ENCODE measurements at regions of chr21 and their contacts with region 1.

Region 1: GRCh38 chr21:33199516-33200217 is 30.1 kb upstream of the IFNAR2 start:
- DNase-seq: peak in 2 of 3 donors; percentile 69 to 81
- ATAC-seq: peak; percentile 80 to 81
- H3K4me3 ChIP-seq: no peak overlapping the region
- H3K27ac ChIP-seq: peak overlapping the region; percentile 86
- H3K4me1 ChIP-seq: peaks cover 5% of the 10 kb centered on the region
- H3K27me3 ChIP-seq: no peaks in the 10 kb centered on the region

Region 2: GRCh38 chr21:32940079-32941014 is 259.3 kb before region 1 on chr21:
- intact Hi-C with region 1: loop called in 2 of 4 experiments (anchors 2 to 5 kb)
- DNase-seq: no peak
- ATAC-seq: no peak
- H3K4me3 ChIP-seq: no peak overlapping the region
- H3K27ac ChIP-seq: no peak overlapping the region
- H3K4me1 ChIP-seq: no peaks in the 10 kb centered on the region
- H3K27me3 ChIP-seq: no peaks in the 10 kb centered on the region

Region 3: GRCh38 chr21:33244082-33244778 is 44.6 kb after region 1 on chr21:
- intact Hi-C with region 1: no loop called
- DNase-seq: no peak
- ATAC-seq: peak in 1 of 2 donors; percentile 58
- H3K4me3 ChIP-seq: no peak overlapping the region
- H3K27ac ChIP-seq: peak overlapping the region; percentile 83
- H3K4me1 ChIP-seq: peaks cover 4% of the 10 kb centered on the region
- H3K27me3 ChIP-seq: no peaks in the 10 kb centered on the region

Region 4: GRCh38 chr21:33374450-33375096 is 174.9 kb after region 1 on chr21:
- intact Hi-C with region 1: loop called in 2 of 4 experiments (anchors 5 to 10 kb)
- DNase-seq: peak in 2 of 3 donors; percentile 57 to 77
- ATAC-seq: peak; percentile 83
- H3K4me3 ChIP-seq: no peak overlapping the region
- H3K27ac ChIP-seq: no peak overlapping the region
- H3K4me1 ChIP-seq: peaks cover 3% of the 10 kb centered on the region
- H3K27me3 ChIP-seq: no peaks in the 10 kb centered on the region

Region 5: GRCh38 chr21:33434770-33435360 is 235.2 kb after region 1 on chr21:
- intact Hi-C with region 1: loop called in 1 of 4 experiments (anchors 10 kb)
- DNase-seq: no peak
- ATAC-seq: peak; percentile 65 to 84
- H3K4me3 ChIP-seq: no peak overlapping the region
- H3K27ac ChIP-seq: peak overlapping the region; percentile 77
- H3K4me1 ChIP-seq: no peaks in the 10 kb centered on the region
- H3K27me3 ChIP-seq: no peaks in the 10 kb centered on the region

Measured in right cardiac atrium (tissue), 5 donors.